ENCODE measurements at regions of chr1 and their contacts with region 1.

Region 1: DNA sequence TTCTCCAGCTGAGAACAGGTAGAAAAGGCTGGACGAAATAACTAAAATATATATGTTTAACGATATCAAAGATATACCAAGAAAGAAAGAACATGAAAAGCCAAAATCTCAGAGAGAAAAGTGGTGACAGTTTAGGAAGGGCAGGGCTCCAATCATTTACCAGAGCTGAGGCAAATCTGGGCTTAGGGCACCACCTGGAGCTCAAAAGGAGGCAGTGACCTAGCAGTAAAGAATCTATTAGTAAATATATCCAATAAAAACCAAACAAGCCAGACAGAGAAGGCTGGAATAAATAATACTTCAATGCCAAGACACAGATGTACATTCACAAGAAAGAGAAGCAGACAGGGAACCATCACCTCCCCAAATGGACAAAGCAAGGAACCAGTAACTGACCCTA is 43.5 kb downstream of the CHIA start:
- DNase-seq: peak; percentile 49 to 69 (median 68)
- H3K4me3 ChIP-seq: no peak overlapping the region
- H3K4me3 Mint-ChIP-seq: peak overlapping the region in 2 of 8 donors; percentile 24 to 45
- H3K27ac ChIP-seq: no peak overlapping the region
- H3K27ac Mint-ChIP-seq: peak overlapping the region in 3 of 7 donors; percentile 1 to 74 (median 3)
- H3K4me1 ChIP-seq: peaks cover 7% of the 10 kb centered on the region
- H3K4me1 Mint-ChIP-seq: peaks cover 2 to 12% (median 4%) of the 10 kb centered on the region in 4 donors
- H3K27me3 ChIP-seq: no peaks in the 10 kb centered on the region
- H3K27me3 Mint-ChIP-seq: no peaks in the 10 kb centered on the region

Region 2: DNA sequence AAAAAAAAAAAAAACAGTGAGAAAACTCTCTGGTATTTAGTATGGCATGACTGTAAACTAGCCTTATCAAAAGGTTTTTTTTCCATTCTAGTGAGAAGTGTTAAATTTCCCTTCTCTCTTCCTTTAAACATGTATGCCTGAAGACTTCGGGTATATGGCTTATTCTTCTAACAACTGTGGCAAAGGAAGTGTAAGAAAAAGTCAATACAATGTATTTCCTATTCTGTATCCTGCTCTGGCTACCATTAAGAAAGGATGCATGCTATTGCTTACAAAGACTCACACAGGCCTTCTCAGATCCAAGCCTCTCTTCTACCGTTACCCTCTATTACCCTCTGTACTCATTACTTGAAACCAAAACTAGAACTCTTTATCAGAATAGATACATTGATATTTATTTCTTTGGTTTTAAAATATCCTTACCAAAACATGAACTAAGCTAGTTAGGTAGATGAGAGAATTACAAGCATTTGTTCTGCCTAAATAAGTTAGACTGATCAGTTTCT is 185.7 kb before region 1 on chr1:
- CTCF ChIA-PET with region 1: no interaction called
- POLR2A ChIA-PET with region 1: no interaction called
- intact Hi-C with region 1: no loop called
- DNase-seq: no peak
- H3K4me3 ChIP-seq: no peak overlapping the region
- H3K4me3 Mint-ChIP-seq: no peak overlapping the region
- H3K27ac ChIP-seq: no peak overlapping the region
- H3K27ac Mint-ChIP-seq: peak overlapping the region in 2 of 7 donors; percentile 48 to 57
- H3K4me1 ChIP-seq: peaks cover 63% of the 10 kb centered on the region
- H3K4me1 Mint-ChIP-seq: peaks cover 53 to 76% (median 67%) of the 10 kb centered on the region in 4 donors
- H3K27me3 ChIP-seq: no peaks in the 10 kb centered on the region
- H3K27me3 Mint-ChIP-seq: no peaks in the 10 kb centered on the region

Region 3: GRCh38 chr1:111227851-111228747 is 106.1 kb before region 1 on chr1:
- CTCF ChIA-PET with region 1: interaction called, 123 read pairs
- POLR2A ChIA-PET with region 1: interaction called, 12 read pairs
- intact Hi-C with region 1: loop called (anchors 1 kb)
- DNase-seq: no peak
- H3K4me3 ChIP-seq: no peak overlapping the region
- H3K4me3 Mint-ChIP-seq: peak overlapping the region in 7 of 8 donors; percentile 22 to 78 (median 54)
- H3K27ac ChIP-seq: no peak overlapping the region
- H3K27ac Mint-ChIP-seq: peak overlapping the region; percentile 57 to 93 (median 88)
- H3K4me1 ChIP-seq: peaks cover 74% of the 10 kb centered on the region
- H3K4me1 Mint-ChIP-seq: peaks cover 51 to 81% (median 66%) of the 10 kb centered on the region in 4 donors
- H3K27me3 ChIP-seq: no peaks in the 10 kb centered on the region
- H3K27me3 Mint-ChIP-seq: no peaks in the 10 kb centered on the region

Region 4: GRCh38 chr1:111399792-111400610 is 65.8 kb after region 1 on chr1:
- CTCF ChIA-PET with region 1: interaction called, 19 read pairs
- POLR2A ChIA-PET with region 1: interaction called, 4 read pairs
- intact Hi-C with region 1: loop called (anchors 1 kb)
- DNase-seq: peak in 4 of 5 donors; percentile 27 to 39 (median 33)
- H3K4me3 ChIP-seq: no peak overlapping the region
- H3K4me3 Mint-ChIP-seq: peak overlapping the region in 1 of 8 donors; percentile 18
- H3K27ac ChIP-seq: no peak overlapping the region
- H3K27ac Mint-ChIP-seq: peak overlapping the region in 4 of 7 donors; percentile 18 to 55 (median 34)
- H3K4me1 ChIP-seq: peaks cover 6% of the 10 kb centered on the region
- H3K4me1 Mint-ChIP-seq: peaks cover 7 to 18% (median 13%) of the 10 kb centered on the region in 4 donors
- H3K27me3 ChIP-seq: no peaks in the 10 kb centered on the region
- H3K27me3 Mint-ChIP-seq: no peaks in the 10 kb centered on the region